Spleen (tissue), 13 donors: ENCODE measurements at regions of chr3 and their contacts with region 1.

Region 1: GRCh38 chr3:49295489-49296058 is 18.5 kb upstream of the C3orf62 start:
- DNase-seq: no peak
- H3K4me3 ChIP-seq: no peak overlapping the region
- H3K27ac ChIP-seq: peak overlapping the region in 2 of 8 donors; percentile 66 to 73
- H3K4me1 ChIP-seq: peaks cover 0 to 33% (median 8%) of the 10 kb centered on the region in 6 donors
- H3K27me3 ChIP-seq: no peaks in the 10 kb centered on the region
- CTCF ChIP-seq: peak in 10 of 11 experiments; percentile 32 to 71 (median 60)
- POLR2A ChIP-seq: no peak

Region 2: DNA sequence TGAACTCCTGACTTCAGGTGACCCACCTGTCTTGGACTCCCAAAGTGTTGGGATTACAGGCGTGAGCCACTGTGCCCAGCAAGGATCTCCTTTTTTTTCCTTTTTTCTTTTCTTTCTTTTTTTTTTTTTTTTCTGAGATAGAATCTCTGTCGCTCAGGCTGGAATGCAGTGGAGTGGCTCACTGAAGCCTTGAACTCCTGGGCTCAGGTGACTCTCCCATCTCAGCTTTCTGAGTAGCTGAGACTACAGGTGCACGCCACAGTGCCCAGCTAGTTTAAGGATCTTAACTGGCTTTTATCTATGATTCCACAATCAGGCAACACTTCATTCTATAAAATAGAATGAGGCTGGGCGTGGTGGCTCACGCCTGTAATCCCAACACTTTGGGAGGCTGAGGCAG is 149.8 kb after region 1 on chr3:
- intact Hi-C with region 1: loop called (anchors 10 kb)
- DNase-seq: no peak
- H3K4me3 ChIP-seq: no peak overlapping the region
- H3K27ac ChIP-seq: peak overlapping the region in 6 of 8 donors; percentile 36 to 86 (median 82)
- H3K4me1 ChIP-seq: peaks cover 12 to 51% (median 27%) of the 10 kb centered on the region in 6 donors
- H3K27me3 ChIP-seq: no peaks in the 10 kb centered on the region
- CTCF ChIP-seq: no peak
- POLR2A ChIP-seq: no peak